ENCODE measurements at regions of chr9 and their contacts with region 1.

Region 1: GRCh38 chr9:137390543-137391410 is 32.2 kb downstream of the EXD3 start:
- DNase-seq: no peak
- ATAC-seq: peak in 6 of 8 donors; percentile 7 to 29 (median 14)
- H3K4me3 ChIP-seq: peak overlapping the region in 4 of 10 donors; percentile 7 to 23 (median 10)
- H3K27ac ChIP-seq: peak overlapping the region; percentile 58 to 92 (median 80)
- H3K4me1 ChIP-seq: peaks cover 0 to 45% (median 23%) of the 10 kb centered on the region in 9 donors
- H3K27me3 ChIP-seq: no peaks in the 10 kb centered on the region
- CTCF ChIP-seq: no peak

Region 2: GRCh38 chr9:137348769-137349470 is 41.9 kb before region 1 on chr9:
- intact Hi-C with region 1: loop called in 1 of 10 experiments (anchors 10 kb)
- DNase-seq: peak in 1 of 2 donors; percentile 15
- ATAC-seq: no peak
- H3K4me3 ChIP-seq: no peak overlapping the region
- H3K27ac ChIP-seq: no peak overlapping the region
- H3K4me1 ChIP-seq: peaks cover 0 to 22% (median 14%) of the 10 kb centered on the region in 9 donors
- H3K27me3 ChIP-seq: no peaks in the 10 kb centered on the region
- CTCF ChIP-seq: no peak

Region 3: GRCh38 chr9:137785704-137786161 is 395.0 kb after region 1 on chr9:
- intact Hi-C with region 1: no loop called
- DNase-seq: no peak
- ATAC-seq: no peak
- H3K4me3 ChIP-seq: no peak overlapping the region
- H3K27ac ChIP-seq: no peak overlapping the region
- H3K4me1 ChIP-seq: no peaks in the 10 kb centered on the region
- H3K27me3 ChIP-seq: no peaks in the 10 kb centered on the region
- CTCF ChIP-seq: no peak

Measured in heart right ventricle (tissue), 16 donors.